ENCODE measurements at regions of chr1 and their contacts with region 1.

Region 1: GRCh38 chr1:46036894-46037839 is 95.3 kb downstream of the PIK3R3 start:
- DNase-seq: peak; percentile 66 to 98 (median 86)
- ATAC-seq: peak; percentile 83 to 97 (median 90)
- H3K4me3 ChIP-seq: no peak overlapping the region
- H3K27ac ChIP-seq: no peak overlapping the region
- H3K4me1 ChIP-seq: no peaks in the 10 kb centered on the region
- H3K27me3 ChIP-seq: no peaks in the 10 kb centered on the region
- CTCF ChIP-seq: peak; percentile 93 to 99 (median 96)

Region 2: DNA sequence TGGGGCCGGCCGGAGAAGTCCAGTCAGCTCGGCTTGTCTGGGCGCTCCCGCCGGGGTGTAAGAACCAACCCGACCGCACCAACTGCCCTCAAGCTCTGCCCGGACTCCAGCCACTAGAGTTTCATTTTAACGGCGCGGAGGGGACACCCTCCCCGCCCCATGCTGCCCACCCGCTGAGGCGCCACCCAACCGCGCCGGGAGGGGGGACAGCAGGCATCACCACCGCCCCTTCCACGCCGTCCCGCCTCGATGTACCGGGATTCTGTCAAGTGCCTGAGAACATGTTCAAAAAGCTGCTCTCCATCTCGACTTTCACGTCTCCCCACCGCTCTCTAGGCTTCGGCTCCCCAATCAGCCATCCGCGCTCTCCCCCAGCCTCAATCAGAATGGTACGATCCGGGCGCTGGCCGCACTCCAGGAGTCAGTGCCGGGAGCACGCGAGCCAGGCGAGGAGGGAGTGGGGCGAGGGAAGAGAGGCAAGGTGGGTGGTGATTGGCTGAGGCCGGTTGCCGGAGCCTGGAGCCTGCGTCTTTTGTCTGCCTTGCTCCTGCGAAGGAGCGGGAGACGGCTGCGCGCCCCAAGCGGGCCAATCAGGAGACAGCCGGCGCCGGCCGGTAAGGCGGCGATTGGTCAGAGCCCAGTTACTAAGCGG is 95.5 kb after region 1 on chr1 and contains the start of gene PIK3R3:
- intact Hi-C with region 1: no loop called
- DNase-seq: peak; percentile 97 to 99 (median 98)
- ATAC-seq: peak; percentile 96 to 99 (median 98)
- H3K4me3 ChIP-seq: peak within 1 kb of the TSS; percentile 53 to 61 (median 56)
- H3K27ac ChIP-seq: peak within 1 kb of the TSS; percentile 80 to 94 (median 86)
- H3K4me1 ChIP-seq: peaks cover 0 to 9% (median 5%) of the 10 kb centered on the region in 3 donors
- H3K27me3 ChIP-seq: peaks cover 0 to 28% (median 8%) of the 10 kb centered on the region in 4 donors
- CTCF ChIP-seq: no peak
- total RNA-seq, gene PIK3R3: 1.2 to 4.9 (median 4.1) TPM

Region 3: GRCh38 chr1:46179138-46180081 is 142.2 kb after region 1 on chr1:
- intact Hi-C with region 1: loop called (anchors 5 kb)
- DNase-seq: peak in 4 of 6 donors; percentile 57 to 77 (median 70)
- ATAC-seq: peak; percentile 44 to 81 (median 69)
- H3K4me3 ChIP-seq: no peak overlapping the region
- H3K27ac ChIP-seq: peak overlapping the region in 1 of 4 donors; percentile 10
- H3K4me1 ChIP-seq: peaks cover 14 to 23% (median 20%) of the 10 kb centered on the region in 3 donors
- H3K27me3 ChIP-seq: no peaks in the 10 kb centered on the region
- CTCF ChIP-seq: peak; percentile 62 to 78 (median 71)

Measured in pancreas (tissue), 10 donors.